Activated CD8-positive, alpha-beta T cell treated with anti-CD3 and anti-CD28 coated beads for 36 hours (primary cell): ENCODE measurements at regions of chr15 and their contacts with region 1.

Region 1: GRCh38 chr15:82150645-82151044 is 104.8 kb upstream of the MEX3B start:
- DNase-seq: no peak
- ATAC-seq: no peak
- H3K4me3 Mint-ChIP-seq: no peak overlapping the region
- H3K27ac Mint-ChIP-seq: no peak overlapping the region
- H3K4me1 Mint-ChIP-seq: no peaks in the 10 kb centered on the region
- H3K27me3 Mint-ChIP-seq: no peaks in the 10 kb centered on the region
- CTCF ChIP-seq: no peak

Region 2: DNA sequence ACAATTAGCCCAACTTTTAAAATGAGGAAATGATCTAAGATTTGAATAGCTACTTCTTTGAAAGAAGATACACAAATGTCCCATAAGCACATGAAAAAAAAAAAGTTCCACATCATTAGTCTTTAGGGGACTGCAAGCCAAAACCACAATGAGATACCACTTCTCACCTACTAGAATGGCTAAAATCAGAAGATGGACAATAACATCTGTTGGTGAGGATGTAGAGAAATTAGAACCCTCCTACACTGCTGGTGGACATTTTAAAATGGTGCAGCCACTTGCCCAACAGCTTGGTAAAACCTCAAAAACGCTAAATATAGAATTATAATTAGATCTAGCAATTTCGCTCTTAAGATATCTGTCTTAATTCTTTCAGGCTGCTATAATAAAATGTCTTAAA is 182.0 kb before region 1 on chr15:
- CTCF ChIA-PET with region 1: no interaction called
- POLR2A ChIA-PET with region 1: no interaction called
- intact Hi-C with region 1: no loop called
- DNase-seq: no peak
- ATAC-seq: no peak
- H3K4me3 Mint-ChIP-seq: no peak overlapping the region
- H3K27ac Mint-ChIP-seq: no peak overlapping the region
- H3K4me1 Mint-ChIP-seq: no peaks in the 10 kb centered on the region
- H3K27me3 Mint-ChIP-seq: peaks cover 2% of the 10 kb centered on the region
- CTCF ChIP-seq: no peak

Region 3: GRCh38 chr15:82139823-82140268 is 10.8 kb before region 1 on chr15:
- CTCF ChIA-PET with region 1: interaction called, 18 read pairs
- POLR2A ChIA-PET with region 1: no interaction called
- intact Hi-C with region 1: no loop called
- DNase-seq: no peak
- ATAC-seq: no peak
- H3K4me3 Mint-ChIP-seq: no peak overlapping the region
- H3K27ac Mint-ChIP-seq: no peak overlapping the region
- H3K4me1 Mint-ChIP-seq: peaks cover 7% of the 10 kb centered on the region
- H3K27me3 Mint-ChIP-seq: no peaks in the 10 kb centered on the region
- CTCF ChIP-seq: peak; percentile 63

Region 4: GRCh38 chr15:82177291-82178010 is 26.8 kb after region 1 on chr15:
- CTCF ChIA-PET with region 1: no interaction called
- POLR2A ChIA-PET with region 1: no interaction called
- intact Hi-C with region 1: no loop called
- DNase-seq: no peak
- ATAC-seq: no peak
- H3K4me3 Mint-ChIP-seq: no peak overlapping the region
- H3K27ac Mint-ChIP-seq: no peak overlapping the region
- H3K4me1 Mint-ChIP-seq: peaks cover 4% of the 10 kb centered on the region
- H3K27me3 Mint-ChIP-seq: no peaks in the 10 kb centered on the region
- CTCF ChIP-seq: no peak